ENCODE measurements at regions of chr9 and their contacts with region 1.

Region 1: GRCh38 chr9:32251539-32251938 is 132.9 kb upstream of the ACO1 start:
- H3K4me3 Mint-ChIP-seq: no peak overlapping the region
- H3K27ac Mint-ChIP-seq: no peak overlapping the region
- H3K4me1 Mint-ChIP-seq: peaks cover 4% of the 10 kb centered on the region
- H3K27me3 Mint-ChIP-seq: no peaks in the 10 kb centered on the region

Region 2: GRCh38 chr9:31119882-31120454 is 1131.6 kb before region 1 on chr9:
- intact Hi-C with region 1: loop called (anchors 10 kb)
- H3K4me3 Mint-ChIP-seq: no peak overlapping the region
- H3K27ac Mint-ChIP-seq: no peak overlapping the region
- H3K4me1 Mint-ChIP-seq: no peaks in the 10 kb centered on the region
- H3K27me3 Mint-ChIP-seq: no peaks in the 10 kb centered on the region